Sciatic nerve (tissue), 2 donors: ENCODE measurements at regions of chr6 and their contacts with region 1.

Region 1: GRCh38 chr6:75124085-75124484 is 81.8 kb downstream of the COL12A1 start:
- DNase-seq: no peak
- ATAC-seq: no peak

Region 2: DNA sequence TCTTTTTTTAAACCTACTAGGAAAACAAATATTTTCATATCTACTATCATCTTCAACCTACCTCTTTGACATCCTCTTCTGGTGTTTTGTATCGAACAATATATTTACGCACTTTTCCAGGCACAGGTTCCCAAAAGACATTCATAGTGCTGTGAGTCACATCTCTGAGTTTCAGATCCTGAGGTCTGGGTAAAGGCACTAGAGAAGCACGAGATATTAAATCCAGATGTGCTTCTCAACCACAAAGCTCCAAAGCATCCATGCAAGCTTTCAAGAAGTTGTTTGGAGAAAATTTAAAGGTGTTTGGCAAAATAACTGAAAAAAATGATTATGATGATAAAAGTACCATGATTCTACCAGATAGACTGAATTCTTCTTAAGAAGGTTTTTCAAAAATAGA is 19.1 kb after region 1 on chr6:
- intact Hi-C with region 1: loop called (anchors 2 kb)
- DNase-seq: no peak
- ATAC-seq: peak; percentile 89